IMR-90 (cell line): ENCODE measurements at regions of chr5 and their contacts with region 1.

Region 1: GRCh38 chr5:38853753-38854463 is 8.1 kb downstream of the OSMR start:
- DNase-seq: peak; percentile 94
- ATAC-seq: peak; percentile 79
- H3K4me3 ChIP-seq: no peak overlapping the region
- H3K27ac ChIP-seq: peak overlapping the region; percentile 32; the same call in 1 of the 2 replicates
- H3K4me1 ChIP-seq: peaks cover 15% of the 10 kb centered on the region
- H3K27me3 ChIP-seq: no peaks in the 10 kb centered on the region
- CTCF ChIP-seq: no peak
- POLR2A ChIP-seq: no peak; the same call in 1 of the 2 replicates
- RAD21 ChIP-seq: no peak

Region 2: GRCh38 chr5:38871790-38872551 is 18.1 kb after region 1 on chr5:
- CTCF ChIA-PET with region 1: interaction called, 6 read pairs
- POLR2A ChIA-PET with region 1: no interaction called
- dilution Hi-C with region 1: no loop called
- in situ Hi-C with region 1: no loop called
- intact Hi-C with region 1: loop called (anchors 2 kb)
- DNase-seq: peak; percentile 100
- ATAC-seq: peak; percentile 98
- H3K4me3 ChIP-seq: no peak overlapping the region
- H3K27ac ChIP-seq: peak overlapping the region; percentile 70
- H3K4me1 ChIP-seq: peaks cover 14% of the 10 kb centered on the region
- H3K27me3 ChIP-seq: no peaks in the 10 kb centered on the region
- CTCF ChIP-seq: no peak
- POLR2A ChIP-seq: peak; percentile 89
- RAD21 ChIP-seq: no peak

Region 3: GRCh38 chr5:38888041-38888440 is 34.1 kb after region 1 on chr5:
- CTCF ChIA-PET with region 1: no interaction called
- POLR2A ChIA-PET with region 1: no interaction called
- dilution Hi-C with region 1: no loop called
- in situ Hi-C with region 1: no loop called
- intact Hi-C with region 1: no loop called
- DNase-seq: no peak
- ATAC-seq: no peak
- H3K4me3 ChIP-seq: no peak overlapping the region
- H3K27ac ChIP-seq: no peak overlapping the region
- H3K4me1 ChIP-seq: no peaks in the 10 kb centered on the region
- H3K27me3 ChIP-seq: no peaks in the 10 kb centered on the region
- CTCF ChIP-seq: no peak
- POLR2A ChIP-seq: no peak
- RAD21 ChIP-seq: no peak